ENCODE measurements at regions of chr7 and their contacts with region 1.

Region 1: GRCh38 chr7:29408841-29409243 is 154.8 kb upstream of the PRR15 start:
- H3K4me3 Mint-ChIP-seq: no peak overlapping the region
- H3K27ac Mint-ChIP-seq: no peak overlapping the region
- H3K4me1 Mint-ChIP-seq: no peaks in the 10 kb centered on the region
- H3K27me3 Mint-ChIP-seq: no peaks in the 10 kb centered on the region

Region 2: DNA sequence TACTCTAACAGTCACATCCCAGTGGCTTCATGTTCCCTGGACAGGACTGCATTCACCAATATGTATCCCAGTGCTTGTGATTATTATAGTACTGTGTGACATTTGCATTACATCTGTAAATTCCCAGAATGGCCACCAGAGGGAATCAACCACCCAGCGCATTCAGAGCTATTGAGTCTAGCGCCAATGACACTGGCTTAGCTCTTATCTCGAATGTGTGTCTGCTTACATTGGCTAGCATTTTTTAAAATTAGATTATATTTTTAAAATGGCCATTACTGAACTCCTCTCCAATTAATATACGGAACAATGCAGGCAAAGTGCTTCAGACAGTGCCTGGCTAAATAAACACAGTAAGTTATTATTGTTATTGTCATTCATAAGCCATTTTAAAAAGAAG is 487.0 kb before region 1 on chr7:
- intact Hi-C with region 1: loop called (anchors 1 kb)
- H3K4me3 Mint-ChIP-seq: no peak overlapping the region
- H3K27ac Mint-ChIP-seq: no peak overlapping the region
- H3K4me1 Mint-ChIP-seq: peaks cover 21% of the 10 kb centered on the region
- H3K27me3 Mint-ChIP-seq: peaks cover 20% of the 10 kb centered on the region

Region 3: DNA sequence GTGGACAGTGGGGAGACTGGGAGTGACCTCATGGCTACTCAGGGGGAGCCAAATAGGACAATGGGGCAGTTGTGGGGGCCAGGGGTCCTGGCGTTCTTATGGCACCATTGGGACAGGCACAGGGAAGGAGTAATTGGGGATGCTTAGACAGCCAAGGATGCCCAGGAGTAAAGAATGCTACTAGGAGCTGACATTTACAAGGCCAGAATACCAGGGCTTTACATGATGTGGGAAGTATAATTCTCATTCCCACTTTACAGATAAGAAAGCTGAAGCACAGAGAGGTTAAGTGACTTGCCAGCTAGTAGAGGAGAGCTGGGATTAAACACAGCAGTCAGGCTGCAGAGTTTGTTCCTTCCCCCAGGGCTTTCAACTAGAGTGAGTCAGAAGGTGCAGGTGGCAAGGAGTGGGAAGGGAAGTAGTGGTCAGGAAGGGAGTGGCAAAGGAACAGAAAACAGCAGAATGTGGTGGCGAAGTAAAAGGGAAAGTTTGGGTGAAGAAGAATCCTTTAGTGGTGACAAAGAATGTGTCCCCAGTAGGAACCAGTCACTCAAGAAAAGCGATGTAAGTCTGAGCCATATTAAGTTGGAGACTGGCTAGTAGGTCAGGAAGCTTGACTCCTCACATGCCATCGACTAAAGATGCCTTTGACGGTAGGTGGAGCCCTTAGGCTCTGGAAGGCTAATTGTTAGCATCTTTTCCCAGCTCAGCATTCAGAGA is 295.3 kb before region 1 on chr7:
- intact Hi-C with region 1: loop called (anchors 5 kb)
- H3K4me3 Mint-ChIP-seq: peak overlapping the region; percentile 2
- H3K27ac Mint-ChIP-seq: peak overlapping the region; percentile 59
- H3K4me1 Mint-ChIP-seq: peaks cover 77% of the 10 kb centered on the region
- H3K27me3 Mint-ChIP-seq: no peaks in the 10 kb centered on the region

Region 4: GRCh38 chr7:29194594-29195427 is 214.0 kb before region 1 on chr7 and contains the start of gene CHN2:
- intact Hi-C with region 1: loop called (anchors 2 kb)
- H3K4me3 Mint-ChIP-seq: peak within 1 kb of the TSS; percentile 89
- H3K27ac Mint-ChIP-seq: peak within 1 kb of the TSS; percentile 66
- H3K4me1 Mint-ChIP-seq: peaks cover 59% of the 10 kb centered on the region
- H3K27me3 Mint-ChIP-seq: peaks cover 20% of the 10 kb centered on the region

Region 5: DNA sequence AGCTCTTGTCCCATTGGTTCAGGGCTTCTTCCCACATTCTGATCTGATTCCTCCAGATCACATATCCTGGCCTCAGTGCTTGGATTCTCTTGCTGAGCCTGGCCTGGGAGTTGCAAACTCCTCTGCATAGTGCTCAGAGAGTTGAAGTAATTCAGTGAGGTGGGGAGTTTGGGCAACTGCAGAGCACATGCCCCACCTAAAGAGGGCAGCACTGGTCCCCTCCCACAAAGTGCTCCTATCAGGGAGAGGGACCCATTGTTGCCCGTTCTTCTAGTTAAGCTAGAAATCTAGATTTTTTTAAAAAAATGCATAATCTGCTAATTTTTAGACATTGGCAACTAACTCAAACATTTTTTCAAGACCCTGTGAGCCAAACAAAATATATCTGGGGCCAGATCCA is 169.2 kb before region 1 on chr7:
- intact Hi-C with region 1: loop called (anchors 10 kb)
- H3K4me3 Mint-ChIP-seq: no peak overlapping the region
- H3K27ac Mint-ChIP-seq: no peak overlapping the region
- H3K4me1 Mint-ChIP-seq: peaks cover 47% of the 10 kb centered on the region
- H3K27me3 Mint-ChIP-seq: no peaks in the 10 kb centered on the region

Region 6: GRCh38 chr7:29397398-29397797 is 11.4 kb before region 1 on chr7:
- intact Hi-C with region 1: no loop called
- H3K4me3 Mint-ChIP-seq: no peak overlapping the region
- H3K27ac Mint-ChIP-seq: no peak overlapping the region
- H3K4me1 Mint-ChIP-seq: no peaks in the 10 kb centered on the region
- H3K27me3 Mint-ChIP-seq: no peaks in the 10 kb centered on the region